ENCODE measurements at regions of chr17 and their contacts with region 1.

Region 1: DNA sequence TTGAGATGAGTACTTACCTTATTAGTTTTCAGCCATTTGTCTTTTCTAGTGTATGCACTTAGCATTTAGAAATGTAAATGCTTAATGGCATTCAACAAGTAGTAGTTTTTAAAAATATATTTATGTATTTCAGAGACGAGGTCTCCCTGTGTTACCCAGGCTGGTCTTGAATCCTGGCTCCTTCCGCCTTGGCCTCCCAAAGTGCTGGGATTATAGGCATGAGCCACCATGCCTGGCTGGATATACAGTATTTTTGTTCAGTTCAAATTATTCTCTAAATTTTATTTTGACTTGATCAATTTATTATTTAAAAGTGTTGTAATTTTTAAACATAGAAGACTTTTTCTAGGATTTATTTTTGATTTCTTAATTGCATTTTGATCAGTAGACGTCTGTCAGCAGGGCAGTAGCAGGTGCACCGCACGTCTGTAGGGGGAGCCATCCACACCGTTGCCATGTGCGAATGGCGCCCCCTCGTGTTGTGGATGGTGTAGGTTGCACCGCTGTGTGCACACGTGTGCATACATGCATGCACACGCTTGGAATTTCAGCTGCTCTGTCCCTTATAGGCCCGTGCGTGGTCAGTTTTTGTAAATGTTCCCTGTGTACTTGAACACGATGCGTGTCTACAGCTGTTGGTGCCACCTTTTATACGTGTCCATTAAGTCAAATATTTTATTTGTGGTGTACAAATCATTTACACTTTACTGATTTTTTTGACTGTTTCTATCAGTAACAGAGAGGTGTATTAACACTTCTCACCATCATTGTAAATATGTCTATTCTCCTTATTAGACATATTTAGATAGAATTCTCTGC is 30.6 kb downstream of the RPTOR start:
- DNase-seq: peak; percentile 97
- H3K4me3 ChIP-seq: no peak overlapping the region
- H3K27ac ChIP-seq: no peak overlapping the region
- H3K4me1 ChIP-seq: peaks cover 7% of the 10 kb centered on the region
- CTCF ChIP-seq: peak; percentile 100

Region 2: GRCh38 chr17:80426681-80427326 is 148.5 kb before region 1 on chr17:
- CTCF ChIA-PET with region 1: interaction called, 3 read pairs
- POLR2A ChIA-PET with region 1: no interaction called
- intact Hi-C with region 1: loop called (anchors 1 kb)
- DNase-seq: peak; percentile 89
- H3K4me3 ChIP-seq: no peak overlapping the region
- H3K27ac ChIP-seq: no peak overlapping the region
- H3K4me1 ChIP-seq: peaks cover 10% of the 10 kb centered on the region
- CTCF ChIP-seq: peak; percentile 99

Region 3: GRCh38 chr17:80474231-80474960 is 100.9 kb before region 1 on chr17:
- CTCF ChIA-PET with region 1: no interaction called
- POLR2A ChIA-PET with region 1: no interaction called
- intact Hi-C with region 1: loop called (anchors 1 kb)
- DNase-seq: peak; percentile 87
- H3K4me3 ChIP-seq: peak overlapping the region; percentile 25
- H3K27ac ChIP-seq: peak overlapping the region; percentile 0
- H3K4me1 ChIP-seq: peaks cover 18% of the 10 kb centered on the region
- CTCF ChIP-seq: peak; percentile 78

Region 4: GRCh38 chr17:80485846-80486245 is 89.4 kb before region 1 on chr17:
- CTCF ChIA-PET with region 1: interaction called, 3 read pairs
- POLR2A ChIA-PET with region 1: no interaction called
- intact Hi-C with region 1: loop called (anchors 1 kb)
- DNase-seq: peak; percentile 100
- H3K4me3 ChIP-seq: peak overlapping the region; percentile 48
- H3K27ac ChIP-seq: peak overlapping the region; percentile 86
- H3K4me1 ChIP-seq: peaks cover 33% of the 10 kb centered on the region
- CTCF ChIP-seq: no peak; the same call in 1 of the 2 replicates

Region 5: DNA sequence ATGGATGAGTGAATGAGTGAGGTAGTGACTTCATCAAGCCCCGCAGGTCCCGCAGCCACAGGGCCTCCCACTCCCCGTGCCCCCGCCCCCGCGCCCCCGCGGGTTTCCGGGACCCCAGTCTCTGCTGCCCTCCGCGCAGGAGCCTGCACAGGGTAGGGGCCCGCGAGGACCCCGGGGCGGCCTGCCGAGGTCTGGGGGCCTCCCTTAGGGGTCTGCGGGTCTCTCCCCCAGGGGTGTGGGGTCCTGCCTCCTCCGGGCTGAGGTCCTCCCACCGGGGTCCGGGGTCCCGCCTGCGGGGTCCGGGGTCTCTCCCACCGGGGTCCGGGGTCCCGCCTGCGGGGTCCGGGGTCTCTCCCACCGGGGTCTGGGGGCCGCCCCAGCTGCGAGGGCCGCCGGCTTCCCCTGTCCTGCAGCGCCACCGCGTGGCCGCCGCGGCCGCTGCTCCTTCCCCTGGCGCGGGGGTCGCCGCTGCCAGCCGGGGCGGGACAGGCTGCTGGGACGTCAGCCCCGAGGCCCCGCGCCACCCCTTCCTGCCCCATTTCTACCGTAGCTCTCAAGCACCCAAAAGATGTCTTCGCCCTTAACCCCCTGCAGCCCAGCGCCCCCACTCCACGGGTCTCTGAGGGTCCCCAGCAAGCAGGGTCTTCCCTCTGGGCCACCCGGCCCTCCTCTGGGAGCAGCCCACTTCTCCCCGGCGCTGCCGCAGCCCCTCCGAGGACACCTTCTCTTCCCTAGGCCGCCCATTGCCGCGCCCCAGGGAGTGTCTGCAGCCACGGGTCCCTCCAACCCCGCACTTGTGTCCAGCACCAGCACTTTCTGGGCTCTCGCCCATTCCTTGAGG is 406.0 kb after region 1 on chr17:
- CTCF ChIA-PET with region 1: no interaction called
- POLR2A ChIA-PET with region 1: no interaction called
- intact Hi-C with region 1: loop called (anchors 1 kb)
- DNase-seq: peak; percentile 51
- H3K4me3 ChIP-seq: no peak overlapping the region
- H3K27ac ChIP-seq: no peak overlapping the region
- H3K4me1 ChIP-seq: no peaks in the 10 kb centered on the region
- CTCF ChIP-seq: peak; percentile 95

Measured in OCI-LY7 (cell line).